Activated T-helper 1 cell treated with anti-CD3 and anti-CD28 coated beads, Interleukin-12 subunit alpha, Interleukin-12 subunit beta, Interleukin-2, Interleukin-4 antibody, amounts not matched to agents 30 ng/mL and 10 ng/mL and 1 ng/mL, durations not matched to agents 14 hours and 24 hours and 36 hours (primary cell): ENCODE measurements at regions of chr11 and their contacts with region 1.

Region 1: DNA sequence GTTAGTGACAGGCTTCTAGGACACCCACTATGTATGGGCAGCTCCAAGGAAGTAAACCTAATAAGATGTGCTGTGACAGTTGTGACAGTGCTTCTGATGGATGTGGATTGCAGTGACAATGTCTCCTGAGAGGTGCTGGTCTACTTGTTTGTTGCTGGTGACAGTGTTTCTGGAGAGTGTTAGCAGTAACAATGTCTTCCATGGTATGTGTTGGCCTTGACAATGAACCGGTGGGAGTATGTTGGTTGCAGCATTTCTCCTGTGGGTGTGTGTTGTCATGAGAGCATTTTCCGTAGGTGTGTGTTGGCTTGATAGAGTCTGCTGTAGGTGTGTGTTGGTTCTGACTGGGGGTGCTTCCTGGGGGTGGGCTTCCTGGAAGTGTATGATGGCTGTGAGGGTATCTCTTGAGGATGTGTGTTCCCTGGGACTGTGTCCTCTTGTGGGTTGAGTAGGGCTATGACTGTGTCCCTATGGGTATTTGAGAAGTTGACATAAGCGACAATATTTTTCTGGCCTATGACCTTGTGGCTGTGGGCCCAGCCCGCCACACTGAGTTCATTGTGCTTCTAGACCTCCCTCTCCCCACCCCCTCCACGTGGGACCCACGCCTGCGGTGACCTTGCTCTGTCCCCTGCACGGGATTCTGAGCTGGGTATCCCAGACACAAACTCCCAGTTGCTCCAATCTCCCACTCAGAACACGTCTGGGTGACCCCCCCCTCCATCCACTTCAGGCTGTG is 1.2 kb downstream of the DCHS1 start:
- DNase-seq: no peak
- H3K4me3 Mint-ChIP-seq: no peak overlapping the region
- H3K27ac Mint-ChIP-seq: no peak overlapping the region
- H3K4me1 Mint-ChIP-seq: no peaks in the 10 kb centered on the region
- H3K27me3 Mint-ChIP-seq: peaks cover 16% of the 10 kb centered on the region

Region 2: DNA sequence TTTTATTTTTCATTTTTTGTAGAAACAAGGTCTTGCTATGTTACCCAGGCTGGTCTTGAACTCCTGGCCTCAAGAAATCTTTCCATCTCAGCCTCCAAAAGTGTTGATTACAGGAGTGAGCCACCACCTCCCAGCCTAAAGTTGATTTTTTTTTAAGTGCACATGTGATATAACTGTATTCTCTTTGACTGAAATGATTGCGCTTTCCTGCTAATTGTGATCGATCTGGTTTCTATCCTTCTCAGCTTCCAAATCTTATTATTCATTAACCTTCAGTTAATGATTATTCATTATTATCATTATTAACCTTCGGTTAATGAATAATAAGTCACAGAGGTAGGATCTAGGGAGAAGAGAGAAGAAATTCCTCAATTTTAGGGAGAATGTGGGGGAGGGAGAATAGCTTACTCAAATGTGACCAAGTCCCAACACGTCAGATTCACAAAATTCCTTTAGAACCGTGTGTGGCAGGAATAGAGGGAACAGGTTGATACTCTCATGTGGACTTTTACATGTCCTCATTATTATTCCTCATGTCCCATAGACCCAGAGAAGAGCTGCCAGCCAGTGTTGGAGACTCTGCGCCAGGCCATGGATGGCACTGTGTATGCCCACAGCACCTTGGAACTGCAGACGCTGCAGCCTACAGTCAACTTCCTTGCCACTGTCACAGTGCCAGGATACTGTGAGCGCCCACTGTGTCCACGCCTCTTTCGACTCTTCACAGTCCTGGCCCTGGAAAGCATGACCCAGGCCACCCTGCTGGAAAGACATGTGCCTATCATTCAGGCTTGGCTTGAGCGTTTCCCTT is 98.1 kb before region 1 on chr11:
- intact Hi-C with region 1: no loop called
- DNase-seq: no peak
- H3K4me3 Mint-ChIP-seq: no peak overlapping the region
- H3K27ac Mint-ChIP-seq: no peak overlapping the region
- H3K4me1 Mint-ChIP-seq: no peaks in the 10 kb centered on the region
- H3K27me3 Mint-ChIP-seq: no peaks in the 10 kb centered on the region

Region 3: GRCh38 chr11:6619004-6619745 is 35.3 kb before region 1 on chr11 and contains the start of gene TPP1:
- intact Hi-C with region 1: loop called (anchors 1 kb)
- DNase-seq: peak; percentile 89
- H3K4me3 Mint-ChIP-seq: no peak within 1 kb of the TSS
- H3K27ac Mint-ChIP-seq: no peak within 1 kb of the TSS
- H3K4me1 Mint-ChIP-seq: no peaks in the 10 kb centered on the region
- H3K27me3 Mint-ChIP-seq: no peaks in the 10 kb centered on the region
- total RNA-seq, gene TPP1: 38.4 and 40.3 TPM in 2 replicates

Region 4: DNA sequence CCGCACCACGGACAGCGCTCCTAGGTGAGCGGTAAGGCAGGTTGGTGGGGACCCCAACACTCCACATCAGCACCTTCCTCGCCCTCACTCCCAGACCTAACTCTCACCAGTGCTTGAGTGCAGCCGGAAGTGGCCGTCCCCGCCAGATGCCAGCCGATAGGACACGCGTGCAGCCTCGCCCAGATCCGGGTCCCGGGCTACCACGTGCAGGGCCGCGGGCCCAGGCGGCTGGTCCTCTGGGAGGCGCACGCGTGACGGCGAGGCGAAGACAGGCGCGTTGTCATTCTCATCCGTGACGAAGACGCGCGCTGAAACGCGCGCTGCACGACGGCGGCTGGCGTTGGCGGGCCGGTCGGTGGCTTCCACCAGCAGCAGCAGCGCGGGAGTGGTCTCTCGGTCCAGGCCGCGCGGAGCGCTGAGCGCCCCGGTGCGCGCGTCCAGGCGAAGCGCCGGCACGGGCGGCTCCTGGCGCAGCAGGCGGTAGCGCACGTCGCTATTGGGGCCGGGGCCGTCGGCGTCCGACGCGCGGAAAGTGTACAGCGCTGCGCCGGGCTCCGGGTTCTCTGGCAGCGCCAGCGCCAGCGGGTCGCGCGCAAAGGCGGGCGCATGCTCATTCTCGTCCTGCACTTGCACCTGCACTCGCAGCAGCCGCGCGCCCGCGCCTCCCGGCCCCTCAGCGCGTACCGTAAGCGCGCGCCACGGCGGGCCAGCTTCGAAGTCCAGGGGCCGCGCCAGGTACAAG is 24.4 kb before region 1 on chr11:
- intact Hi-C with region 1: no loop called
- DNase-seq: no peak
- H3K4me3 Mint-ChIP-seq: no peak overlapping the region
- H3K27ac Mint-ChIP-seq: no peak overlapping the region
- H3K4me1 Mint-ChIP-seq: peaks cover 13% of the 10 kb centered on the region
- H3K27me3 Mint-ChIP-seq: no peaks in the 10 kb centered on the region